Tibial artery (tissue), 4 donors: ENCODE measurements at regions of chr15 and their contacts with region 1.

Region 1: GRCh38 chr15:85412956-85413854 is 32.8 kb downstream of the AKAP13 start:
- DNase-seq: peak; percentile 70 to 78
- H3K4me3 ChIP-seq: no peak overlapping the region
- H3K27ac ChIP-seq: no peak overlapping the region
- H3K4me1 ChIP-seq: peaks cover 0 to 21% (median 3%) of the 10 kb centered on the region in 4 donors
- H3K27me3 ChIP-seq: no peaks in the 10 kb centered on the region
- CTCF ChIP-seq: no peak

Region 2: GRCh38 chr15:85296615-85297402 is 116.4 kb before region 1 on chr15:
- intact Hi-C with region 1: loop called (anchors 10 kb)
- DNase-seq: peak in 1 of 2 donors; percentile 47
- H3K4me3 ChIP-seq: peak overlapping the region; percentile 19 to 28
- H3K27ac ChIP-seq: no peak overlapping the region
- H3K4me1 ChIP-seq: peaks cover 0 to 4% (median 0%) of the 10 kb centered on the region in 4 donors
- H3K27me3 ChIP-seq: peaks cover 0 to 3% of the 10 kb centered on the region in 2 donors
- CTCF ChIP-seq: peak; percentile 70 to 72